Right cardiac atrium (tissue), 5 donors: ENCODE measurements at regions of chr3 and their contacts with region 1.

Region 1: GRCh38 chr3:52428151-52429005 is 16.5 kb downstream of the SEMA3G start:
- DNase-seq: peak; percentile 57 to 84 (median 63)
- ATAC-seq: peak; percentile 79 to 84
- H3K4me3 ChIP-seq: no peak overlapping the region
- H3K27ac ChIP-seq: peak overlapping the region; percentile 51
- H3K4me1 ChIP-seq: peaks cover 16% of the 10 kb centered on the region
- H3K27me3 ChIP-seq: no peaks in the 10 kb centered on the region

Region 2: GRCh38 chr3:52446631-52447511 is 18.5 kb after region 1 on chr3:
- intact Hi-C with region 1: loop called in 2 of 4 experiments (anchors 1 to 2 kb)
- DNase-seq: peak; percentile 58 to 81 (median 68)
- ATAC-seq: peak; percentile 11 to 38
- H3K4me3 ChIP-seq: no peak overlapping the region
- H3K27ac ChIP-seq: no peak overlapping the region
- H3K4me1 ChIP-seq: peaks cover 5% of the 10 kb centered on the region
- H3K27me3 ChIP-seq: no peaks in the 10 kb centered on the region

Region 3: GRCh38 chr3:52670621-52671521 is 242.5 kb after region 1 on chr3:
- intact Hi-C with region 1: loop called in 1 of 4 experiments (anchors 10 kb)
- DNase-seq: no peak
- ATAC-seq: peak; percentile 84 to 95
- H3K4me3 ChIP-seq: no peak overlapping the region
- H3K27ac ChIP-seq: peak overlapping the region; percentile 83
- H3K4me1 ChIP-seq: peaks cover 6% of the 10 kb centered on the region
- H3K27me3 ChIP-seq: no peaks in the 10 kb centered on the region